Natural killer cell (primary cell): ENCODE measurements at regions of chr1 and their contacts with region 1.

Region 1: DNA sequence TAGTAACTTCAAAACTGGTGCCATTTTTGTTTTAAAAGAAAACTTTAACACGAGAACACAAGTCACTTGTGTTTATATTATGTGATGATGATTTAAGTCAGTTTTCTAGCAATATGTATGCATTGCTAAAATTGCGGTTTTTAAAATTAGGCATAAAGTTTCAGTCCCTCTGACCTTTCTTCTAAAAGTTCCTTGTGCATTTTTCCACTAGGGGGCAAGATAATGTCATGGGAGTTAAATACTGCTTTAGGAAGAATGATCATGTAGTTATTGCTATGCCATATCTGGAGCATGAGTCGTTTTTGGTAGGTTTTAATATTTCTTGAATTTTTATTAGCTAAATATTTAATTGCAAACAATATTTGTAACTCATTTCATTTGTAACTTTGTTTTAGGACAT is 10.7 kb downstream of the CDC7 start:
- DNase-seq: peak in 1 of 2 donors; percentile 70
- ATAC-seq: peak in 2 of 3 donors; percentile 49 to 72
- H3K4me3 ChIP-seq: no peak overlapping the region
- H3K4me3 Mint-ChIP-seq: no peak overlapping the region
- H3K27ac ChIP-seq: no peak overlapping the region
- H3K27ac Mint-ChIP-seq: no peak overlapping the region
- H3K4me1 ChIP-seq: no peaks in the 10 kb centered on the region
- H3K4me1 Mint-ChIP-seq: peaks cover 11 to 24% of the 10 kb centered on the region in 2 donors
- H3K27me3 ChIP-seq: no peaks in the 10 kb centered on the region
- H3K27me3 Mint-ChIP-seq: no peaks in the 10 kb centered on the region
- CTCF ChIP-seq: peak; percentile 70

Region 2: GRCh38 chr1:91124989-91125417 is 386.4 kb before region 1 on chr1:
- intact Hi-C with region 1: no loop called
- DNase-seq: peak; percentile 32 to 54
- ATAC-seq: peak; percentile 82 to 94 (median 84)
- H3K4me3 ChIP-seq: no peak overlapping the region
- H3K4me3 Mint-ChIP-seq: peak overlapping the region; percentile 1
- H3K27ac ChIP-seq: no peak overlapping the region
- H3K27ac Mint-ChIP-seq: peak overlapping the region in 1 of 2 donors; percentile 31
- H3K4me1 ChIP-seq: peaks cover 16% of the 10 kb centered on the region
- H3K4me1 Mint-ChIP-seq: peaks cover 23 to 24% of the 10 kb centered on the region in 2 donors
- H3K27me3 ChIP-seq: peaks cover 2% of the 10 kb centered on the region
- H3K27me3 Mint-ChIP-seq: peaks cover 20 to 63% of the 10 kb centered on the region in 2 donors
- CTCF ChIP-seq: no peak

Region 3: GRCh38 chr1:91282695-91283420 is 228.5 kb before region 1 on chr1:
- intact Hi-C with region 1: loop called (anchors 5 kb)
- DNase-seq: peak in 1 of 2 donors; percentile 72
- ATAC-seq: peak; percentile 52 to 62 (median 53)
- H3K4me3 ChIP-seq: no peak overlapping the region
- H3K4me3 Mint-ChIP-seq: no peak overlapping the region
- H3K27ac ChIP-seq: no peak overlapping the region
- H3K27ac Mint-ChIP-seq: no peak overlapping the region
- H3K4me1 ChIP-seq: no peaks in the 10 kb centered on the region
- H3K4me1 Mint-ChIP-seq: no peaks in the 10 kb centered on the region
- H3K27me3 ChIP-seq: no peaks in the 10 kb centered on the region
- H3K27me3 Mint-ChIP-seq: peaks cover 10 to 18% of the 10 kb centered on the region in 2 donors
- CTCF ChIP-seq: peak; percentile 80

Region 4: GRCh38 chr1:91684481-91685196 is 173.3 kb after region 1 on chr1:
- intact Hi-C with region 1: loop called (anchors 5 kb)
- DNase-seq: peak in 1 of 2 donors; percentile 61
- ATAC-seq: peak; percentile 67 to 73 (median 73)
- H3K4me3 ChIP-seq: no peak overlapping the region
- H3K4me3 Mint-ChIP-seq: peak overlapping the region; percentile 68
- H3K27ac ChIP-seq: peak overlapping the region; percentile 57
- H3K27ac Mint-ChIP-seq: peak overlapping the region; percentile 91 to 92
- H3K4me1 ChIP-seq: peaks cover 39% of the 10 kb centered on the region
- H3K4me1 Mint-ChIP-seq: peaks cover 69 to 81% of the 10 kb centered on the region in 2 donors
- H3K27me3 ChIP-seq: no peaks in the 10 kb centered on the region
- H3K27me3 Mint-ChIP-seq: no peaks in the 10 kb centered on the region
- CTCF ChIP-seq: no peak

Region 5: GRCh38 chr1:91732291-91733107 is 221.1 kb after region 1 on chr1:
- intact Hi-C with region 1: loop called (anchors 5 kb)
- DNase-seq: peak; percentile 27 to 52
- ATAC-seq: peak; percentile 39 to 63 (median 62)
- H3K4me3 ChIP-seq: no peak overlapping the region
- H3K4me3 Mint-ChIP-seq: peak overlapping the region; percentile 50
- H3K27ac ChIP-seq: peak overlapping the region; percentile 15
- H3K27ac Mint-ChIP-seq: peak overlapping the region; percentile 88 to 90
- H3K4me1 ChIP-seq: peaks cover 50% of the 10 kb centered on the region
- H3K4me1 Mint-ChIP-seq: peaks cover 84 to 89% of the 10 kb centered on the region in 2 donors
- H3K27me3 ChIP-seq: no peaks in the 10 kb centered on the region
- H3K27me3 Mint-ChIP-seq: no peaks in the 10 kb centered on the region
- CTCF ChIP-seq: no peak

Region 6: DNA sequence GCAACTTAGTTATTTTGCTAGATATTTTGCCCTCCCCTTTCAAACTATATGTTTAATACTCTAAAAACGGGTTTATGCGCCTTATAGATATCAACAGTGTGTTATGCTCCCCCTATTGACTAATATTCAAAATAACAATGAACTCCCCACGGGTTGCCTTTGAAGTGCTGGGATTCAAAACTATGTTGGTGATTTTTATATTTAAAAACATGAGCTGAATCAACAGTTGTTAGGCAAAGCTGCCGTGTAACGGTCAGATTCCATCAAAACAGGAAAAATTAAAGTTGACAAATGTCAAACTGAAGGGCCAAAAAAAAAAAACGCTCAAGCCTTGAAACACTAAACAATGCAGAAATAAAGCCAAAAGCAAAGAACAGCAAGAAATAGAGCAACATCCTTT is 372.1 kb after region 1 on chr1:
- intact Hi-C with region 1: loop called (anchors 5 kb)
- DNase-seq: peak in 1 of 2 donors; percentile 67
- ATAC-seq: peak in 1 of 3 donors; percentile 18
- H3K4me3 ChIP-seq: peak overlapping the region; percentile 52
- H3K4me3 Mint-ChIP-seq: peak overlapping the region; percentile 99
- H3K27ac ChIP-seq: no peak overlapping the region
- H3K27ac Mint-ChIP-seq: peak overlapping the region; percentile 85 to 97
- H3K4me1 ChIP-seq: peaks cover 43% of the 10 kb centered on the region
- H3K4me1 Mint-ChIP-seq: peaks cover 61 to 65% of the 10 kb centered on the region in 2 donors
- H3K27me3 ChIP-seq: no peaks in the 10 kb centered on the region
- H3K27me3 Mint-ChIP-seq: no peaks in the 10 kb centered on the region
- CTCF ChIP-seq: peak; percentile 64